ENCODE measurements at regions of chr2 and their contacts with region 1.

Region 1: GRCh38 chr2:113756355-113757137 is at the start of gene SLC35F5:
- DNase-seq: peak; percentile 93
- H3K4me3 ChIP-seq: peak within 1 kb of the TSS; percentile 89 to 93 (median 91)
- H3K27ac ChIP-seq: peak within 1 kb of the TSS; percentile 87
- H3K4me1 ChIP-seq: peaks cover 8% of the 10 kb centered on the region
- H3K27me3 ChIP-seq: no peaks in the 10 kb centered on the region
- CTCF ChIP-seq: peak in 1 of 2 donors; percentile 14
- total RNA-seq, gene SLC35F5: 66.7 to 148 TPM

Region 2: DNA sequence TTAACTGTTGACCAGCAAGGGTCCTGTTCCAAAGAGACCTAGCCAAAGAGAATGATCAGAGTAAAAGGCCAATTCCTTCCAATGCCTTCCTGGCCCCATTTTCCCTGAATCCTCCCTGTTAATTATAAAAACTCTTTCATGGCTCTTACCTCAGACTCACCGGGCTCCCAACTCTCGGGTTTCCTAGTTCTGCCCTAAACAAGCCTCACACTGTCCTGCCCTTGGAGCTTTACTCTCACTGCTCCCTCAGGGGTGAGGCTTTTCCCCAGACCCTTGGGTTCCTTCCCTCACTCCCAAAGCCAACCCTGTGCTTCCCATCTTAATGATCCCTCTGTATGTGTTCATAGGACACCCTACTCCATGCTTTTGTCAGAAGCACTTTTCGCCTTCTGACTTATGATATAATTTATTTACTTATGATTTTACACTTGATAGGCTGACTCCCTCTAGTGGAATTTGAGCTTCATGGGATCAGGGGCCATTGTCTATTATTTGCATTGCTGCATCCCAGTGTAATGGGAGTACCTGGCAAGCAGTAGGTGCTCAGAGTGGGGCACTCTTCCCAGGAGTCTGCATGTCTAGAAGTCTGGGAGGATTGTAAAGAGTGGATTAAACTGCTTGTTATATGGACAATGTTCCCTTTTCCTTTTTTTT is 349.0 kb before region 1 on chr2:
- CTCF ChIA-PET with region 1: no interaction called
- dilution Hi-C with region 1: no loop called
- in situ Hi-C with region 1: no loop called
- intact Hi-C with region 1: no loop called
- DNase-seq: peak; percentile 45
- H3K4me3 ChIP-seq: no peak overlapping the region
- H3K27ac ChIP-seq: no peak overlapping the region
- H3K4me1 ChIP-seq: no peaks in the 10 kb centered on the region
- H3K27me3 ChIP-seq: no peaks in the 10 kb centered on the region
- CTCF ChIP-seq: peak; percentile 35 to 46

Region 3: DNA sequence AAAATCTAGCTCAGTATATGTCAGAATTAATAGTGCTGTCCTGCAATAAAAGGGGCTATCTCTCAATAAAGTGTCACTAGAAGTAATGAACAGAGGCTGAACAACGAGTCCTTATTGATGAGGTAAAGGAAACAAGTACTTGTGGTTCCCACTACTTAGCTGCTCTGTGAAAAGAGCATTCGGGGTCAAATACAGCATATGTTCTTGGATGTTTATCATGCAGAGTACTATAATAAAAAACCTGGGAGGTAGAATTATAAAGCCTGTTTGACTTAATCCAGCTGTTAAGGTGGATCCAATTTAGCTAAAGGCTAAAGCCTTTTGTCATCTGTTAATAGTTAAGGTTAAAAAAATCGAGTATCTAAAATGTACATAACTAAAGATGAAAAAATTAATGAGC is 32.5 kb before region 1 on chr2:
- CTCF ChIA-PET with region 1: no interaction called
- dilution Hi-C with region 1: no loop called
- in situ Hi-C with region 1: no loop called
- intact Hi-C with region 1: no loop called
- DNase-seq: no peak
- H3K4me3 ChIP-seq: no peak overlapping the region
- H3K27ac ChIP-seq: no peak overlapping the region
- H3K4me1 ChIP-seq: no peaks in the 10 kb centered on the region
- H3K27me3 ChIP-seq: no peaks in the 10 kb centered on the region
- CTCF ChIP-seq: no peak

Region 4: DNA sequence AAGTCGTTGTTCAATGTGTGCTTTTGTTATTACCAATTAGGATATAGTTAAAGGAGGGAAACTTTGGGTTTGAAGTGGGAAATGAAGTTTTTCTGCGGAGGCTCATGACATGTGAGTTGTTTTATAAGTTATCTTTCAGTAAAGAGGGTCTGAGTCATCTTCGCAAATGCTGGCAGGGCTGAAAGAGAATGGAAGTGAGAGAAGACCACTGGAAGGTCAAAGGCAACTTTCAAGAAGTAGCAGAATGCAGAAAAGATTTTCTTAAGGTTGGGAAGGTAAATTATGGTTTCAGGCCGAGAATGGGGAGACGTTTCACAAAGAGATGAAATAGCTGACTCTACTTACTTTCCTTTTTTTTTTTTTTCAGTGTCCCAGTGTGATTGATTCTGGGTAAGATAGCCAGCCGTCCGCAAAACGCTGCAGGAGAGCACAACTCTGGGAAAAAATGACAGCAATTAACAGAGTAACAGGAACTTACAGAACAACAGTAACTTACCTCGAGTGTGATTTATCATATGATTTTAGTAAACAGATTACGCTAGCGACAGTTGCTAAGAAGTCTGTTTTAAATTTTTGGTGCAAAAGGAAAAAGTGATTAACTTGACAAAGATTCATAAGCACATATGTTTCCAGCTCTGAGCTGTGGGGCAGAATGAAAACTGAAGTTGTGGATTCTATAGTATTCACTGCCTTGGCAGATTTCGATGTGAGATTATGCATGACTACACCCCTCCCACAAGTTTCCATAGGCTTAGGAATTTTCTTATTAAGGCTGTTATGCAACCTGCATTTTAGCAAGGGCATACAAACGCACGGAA is 86.6 kb after region 1 on chr2:
- CTCF ChIA-PET with region 1: no interaction called
- dilution Hi-C with region 1: no loop called
- in situ Hi-C with region 1: no loop called
- intact Hi-C with region 1: loop called (anchors 5 kb)
- DNase-seq: peak; percentile 93
- H3K4me3 ChIP-seq: peak overlapping the region in 2 of 3 experiments; percentile 31 to 33
- H3K27ac ChIP-seq: peak overlapping the region; percentile 95
- H3K4me1 ChIP-seq: peaks cover 10% of the 10 kb centered on the region
- H3K27me3 ChIP-seq: no peaks in the 10 kb centered on the region
- CTCF ChIP-seq: no peak

Region 5: GRCh38 chr2:113915082-113915819 is 158.7 kb after region 1 on chr2:
- CTCF ChIA-PET with region 1: no interaction called
- dilution Hi-C with region 1: no loop called
- in situ Hi-C with region 1: no loop called
- intact Hi-C with region 1: loop called (anchors 2 kb)
- DNase-seq: no peak
- H3K4me3 ChIP-seq: no peak overlapping the region
- H3K27ac ChIP-seq: no peak overlapping the region
- H3K4me1 ChIP-seq: peaks cover under 1% of the 10 kb centered on the region
- H3K27me3 ChIP-seq: no peaks in the 10 kb centered on the region
- CTCF ChIP-seq: no peak

Region 6: GRCh38 chr2:114056294-114057143 is 300.0 kb after region 1 on chr2:
- CTCF ChIA-PET with region 1: no interaction called
- dilution Hi-C with region 1: no loop called
- in situ Hi-C with region 1: no loop called
- intact Hi-C with region 1: no loop called
- DNase-seq: no peak
- H3K4me3 ChIP-seq: no peak overlapping the region
- H3K27ac ChIP-seq: no peak overlapping the region
- H3K4me1 ChIP-seq: no peaks in the 10 kb centered on the region
- H3K27me3 ChIP-seq: no peaks in the 10 kb centered on the region
- CTCF ChIP-seq: no peak